OCI-LY7 (cell line): ENCODE measurements at regions of chr1 and their contacts with region 1.

Region 1: GRCh38 chr1:112395821-112396652 is at the start of gene CTTNBP2NL:
- DNase-seq: peak; percentile 85
- H3K4me3 ChIP-seq: peak within 1 kb of the TSS; percentile 89
- H3K27ac ChIP-seq: no peak within 1 kb of the TSS
- H3K4me1 ChIP-seq: peaks cover 61% of the 10 kb centered on the region
- CTCF ChIP-seq: no peak
- total RNA-seq, gene CTTNBP2NL: 1.5 and 2.1 TPM in 2 replicates

Region 2: DNA sequence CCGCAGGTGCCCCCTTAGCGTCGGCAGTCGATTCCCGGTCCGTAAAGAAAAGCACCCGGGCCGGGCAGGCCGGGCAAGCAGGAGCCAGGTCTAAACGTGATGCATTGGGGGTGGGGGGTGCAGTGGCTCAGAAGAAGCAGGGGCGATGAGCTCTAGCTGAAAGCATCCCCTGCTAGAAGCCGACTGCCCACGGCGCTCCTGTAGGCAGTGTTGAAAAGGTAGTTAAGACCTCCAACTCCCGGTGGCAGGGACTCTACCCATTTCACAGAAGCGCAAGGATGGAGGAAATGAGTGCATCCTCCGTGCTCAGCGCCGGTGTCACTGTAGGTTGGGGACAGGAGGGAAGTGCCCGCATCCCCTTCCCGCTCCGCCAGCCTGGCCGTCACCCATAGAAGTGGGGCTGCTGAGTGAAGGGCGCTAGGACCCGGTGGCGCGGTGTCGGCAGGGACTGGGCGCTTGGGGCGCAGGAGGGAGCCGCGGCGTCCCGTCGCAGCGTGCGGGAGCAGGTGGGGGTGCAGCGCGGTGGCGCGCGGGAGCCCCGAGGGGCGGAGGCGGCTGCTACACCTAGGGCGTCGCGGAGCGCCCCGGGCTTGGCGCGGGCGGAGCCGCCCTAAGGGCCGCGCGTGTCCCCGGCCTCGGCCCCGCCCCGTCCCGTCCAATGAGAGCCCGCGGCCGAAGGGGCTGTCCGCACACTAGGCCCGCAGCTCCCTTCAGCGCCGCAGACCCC is 112.4 kb after region 1 on chr1 and contains the start of gene WNT2B:
- CTCF ChIA-PET with region 1: interaction called, 4 read pairs
- POLR2A ChIA-PET with region 1: interaction called, 9 read pairs
- intact Hi-C with region 1: loop called (anchors 2 kb)
- DNase-seq: peak; percentile 55
- H3K4me3 ChIP-seq: peak within 1 kb of the TSS; percentile 68
- H3K27ac ChIP-seq: no peak within 1 kb of the TSS
- H3K4me1 ChIP-seq: peaks cover 42% of the 10 kb centered on the region
- CTCF ChIP-seq: no peak
- total RNA-seq, gene WNT2B: 0.32 and 0.39 TPM in 2 replicates

Region 3: GRCh38 chr1:113396585-113396984 is 1000.5 kb after region 1 on chr1:
- CTCF ChIA-PET with region 1: no interaction called
- POLR2A ChIA-PET with region 1: no interaction called
- intact Hi-C with region 1: no loop called
- DNase-seq: no peak
- H3K4me3 ChIP-seq: no peak overlapping the region
- H3K27ac ChIP-seq: no peak overlapping the region
- H3K4me1 ChIP-seq: peaks cover 6% of the 10 kb centered on the region
- CTCF ChIP-seq: no peak